BJ (cell line): ENCODE measurements at regions of chr1 and their contacts with region 1.

Region 1: GRCh38 chr1:224052772-224053171 is 61.1 kb upstream of the FBXO28 start:
- DNase-seq: no peak
- H3K4me3 ChIP-seq: no peak overlapping the region
- H3K27me3 ChIP-seq: no peaks in the 10 kb centered on the region
- CTCF ChIP-seq: no peak

Region 2: GRCh38 chr1:224042557-224043118 is 10.1 kb before region 1 on chr1:
- CTCF ChIA-PET with region 1: interaction called, 10 read pairs
- POLR2A ChIA-PET with region 1: no interaction called
- DNase-seq: no peak
- H3K4me3 ChIP-seq: no peak overlapping the region
- H3K27me3 ChIP-seq: peaks cover 3% of the 10 kb centered on the region
- CTCF ChIP-seq: no peak

Region 3: GRCh38 chr1:224067621-224068457 is 15.1 kb after region 1 on chr1:
- CTCF ChIA-PET with region 1: interaction called, 13 read pairs
- POLR2A ChIA-PET with region 1: no interaction called
- DNase-seq: no peak
- H3K4me3 ChIP-seq: no peak overlapping the region
- H3K27me3 ChIP-seq: no peaks in the 10 kb centered on the region
- CTCF ChIP-seq: no peak